ENCODE measurements at regions of chr4 and their contacts with region 1.

Region 1: DNA sequence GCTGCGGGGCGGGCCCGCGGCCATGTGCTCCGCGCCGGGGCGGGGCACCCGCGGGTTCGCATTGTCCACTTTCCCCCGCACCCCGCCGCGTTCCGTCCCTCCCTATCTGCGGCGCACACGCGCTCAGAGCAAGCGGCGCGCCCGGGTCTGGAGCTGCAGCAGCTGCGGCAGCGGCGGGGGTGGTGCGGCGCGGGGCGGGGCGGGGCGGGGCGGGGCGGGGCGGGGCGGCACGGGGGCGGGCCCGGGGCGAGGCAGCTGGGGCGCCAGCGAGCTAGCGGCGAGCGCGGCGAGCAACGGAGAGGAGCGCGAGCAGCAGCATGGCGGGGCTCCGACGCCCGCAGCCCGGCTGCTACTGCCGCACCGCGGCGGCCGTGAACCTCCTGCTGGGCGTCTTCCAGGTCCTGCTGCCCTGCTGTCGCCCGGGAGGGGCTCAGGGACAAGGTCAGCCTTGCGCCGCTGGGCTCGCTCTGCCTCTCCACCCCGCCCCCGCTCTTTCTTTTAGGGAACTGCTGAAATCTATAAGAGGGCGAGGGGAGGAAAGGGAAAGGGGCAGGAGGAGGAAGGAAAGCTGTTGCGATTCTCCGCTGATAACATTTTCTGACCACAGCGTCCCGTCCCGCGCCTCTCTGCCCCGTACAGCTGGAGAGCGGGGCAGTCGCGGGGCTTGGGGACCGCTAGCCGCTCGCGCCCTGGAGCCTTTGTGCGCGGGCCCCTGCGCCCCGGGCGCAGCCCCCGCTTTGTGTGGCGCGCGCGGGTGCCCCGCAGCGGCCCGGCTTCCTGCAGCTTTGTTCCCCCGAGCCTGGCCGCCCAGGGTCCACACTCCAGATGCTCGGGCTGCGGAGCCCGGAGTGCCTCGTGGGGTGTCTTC is at the start of gene TMEM131L:
- DNase-seq: peak; percentile 64
- H3K4me3 ChIP-seq: peak within 1 kb of the TSS; percentile 82 to 94 (median 88)
- H3K27ac ChIP-seq: peak within 1 kb of the TSS; percentile 50
- H3K4me1 ChIP-seq: peaks cover 28% of the 10 kb centered on the region
- H3K27me3 ChIP-seq: no peaks in the 10 kb centered on the region
- CTCF ChIP-seq: peak in 1 of 2 donors; percentile 40
- total RNA-seq, gene TMEM131L: 17.4 to 33.8 TPM

Region 2: DNA sequence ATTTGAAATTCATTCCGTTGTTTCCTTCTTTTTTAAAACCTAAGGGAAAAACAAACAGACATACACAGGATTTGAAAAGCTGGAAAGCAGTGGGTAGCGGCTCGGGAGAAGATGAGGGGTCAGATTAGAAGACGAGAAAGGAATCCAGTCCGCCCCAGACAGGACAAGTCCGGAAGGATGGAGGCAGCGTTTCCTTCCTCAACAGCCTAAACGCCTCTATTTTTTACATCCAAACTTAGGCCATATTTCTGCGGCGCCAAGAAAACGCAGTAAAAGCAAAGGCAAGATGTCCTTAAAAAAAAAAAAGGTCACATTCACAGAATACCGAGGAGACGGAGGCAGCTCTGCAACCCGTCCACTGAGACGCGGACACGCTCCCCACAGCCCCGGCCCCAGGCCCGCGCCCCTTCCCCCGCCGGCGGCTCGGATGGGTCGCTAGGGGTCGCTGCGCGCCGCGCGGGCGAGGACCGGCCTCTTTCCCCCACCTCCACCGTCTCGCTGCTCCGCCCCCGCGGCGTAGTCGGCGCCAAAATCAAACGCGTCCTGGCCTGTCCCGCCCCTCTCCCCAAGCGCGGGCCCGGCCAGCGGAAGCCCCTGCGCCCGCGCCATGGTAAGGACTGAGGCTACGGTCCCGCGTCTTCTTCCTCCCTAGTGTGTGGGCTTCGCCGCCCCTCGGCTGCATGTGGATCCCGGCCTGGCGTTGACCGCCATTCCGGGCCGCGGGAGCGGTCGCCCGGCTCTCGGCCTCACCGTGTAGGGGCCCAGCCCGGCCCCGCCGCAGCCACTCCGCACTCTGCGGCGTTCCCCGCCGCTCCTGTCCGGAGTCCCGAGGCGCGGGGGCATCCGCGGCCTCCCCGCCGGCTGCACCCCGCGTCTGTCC is 121.9 kb before region 1 on chr4 and contains the start of gene MND1:
- CTCF ChIA-PET with region 1: no interaction called
- dilution Hi-C with region 1: no loop called
- in situ Hi-C with region 1: no loop called
- intact Hi-C with region 1: loop called (anchors 1 kb)
- DNase-seq: peak; percentile 80
- H3K4me3 ChIP-seq: peak within 1 kb of the TSS; percentile 58 to 95 (median 86)
- H3K27ac ChIP-seq: peak within 1 kb of the TSS; percentile 93
- H3K4me1 ChIP-seq: peaks cover 12% of the 10 kb centered on the region
- H3K27me3 ChIP-seq: no peaks in the 10 kb centered on the region
- CTCF ChIP-seq: peak in 1 of 2 donors; percentile 84
- total RNA-seq, gene MND1: 0.83 to 10.4 TPM

Region 3: DNA sequence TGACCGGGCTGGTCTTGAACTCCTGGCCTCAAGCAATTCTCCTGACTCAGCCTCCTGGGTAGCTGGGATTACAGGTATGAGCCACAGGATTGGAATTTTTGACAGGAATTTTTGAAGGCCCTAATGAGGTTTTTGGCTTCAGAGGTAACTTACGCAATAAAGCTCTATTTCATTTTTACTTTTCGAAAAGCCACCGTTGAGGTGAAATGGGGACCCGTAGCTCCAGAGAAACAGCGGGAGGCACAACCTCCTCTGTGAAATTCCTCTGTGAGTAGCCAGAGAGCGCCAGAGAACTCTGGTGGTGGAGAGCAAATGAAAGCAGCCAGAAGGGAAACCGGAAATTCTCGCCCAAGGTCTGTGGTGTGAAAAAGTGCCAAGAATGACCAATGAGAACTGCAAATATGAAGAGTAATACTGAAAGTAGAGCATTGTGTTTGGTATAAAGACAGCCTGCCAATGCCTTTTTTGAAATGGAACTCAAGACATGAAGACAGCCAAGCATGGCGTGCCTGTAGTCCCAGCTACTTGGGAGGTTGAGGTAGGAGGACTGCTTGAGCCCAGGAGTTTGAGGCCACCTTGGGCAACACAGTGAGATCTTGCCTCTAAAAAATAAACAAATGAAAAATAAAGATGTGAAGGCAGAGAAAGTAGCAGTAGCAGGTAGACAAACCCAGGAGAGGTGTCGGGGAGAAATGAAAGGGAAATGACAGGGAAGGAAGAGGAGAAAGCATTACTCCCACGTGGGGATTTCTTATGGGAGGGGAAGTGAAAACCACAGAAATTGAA is 33.2 kb before region 1 on chr4:
- CTCF ChIA-PET with region 1: interaction called, 8 read pairs
- dilution Hi-C with region 1: no loop called
- in situ Hi-C with region 1: no loop called
- intact Hi-C with region 1: loop called (anchors 2 kb)
- DNase-seq: peak; percentile 94
- H3K4me3 ChIP-seq: no peak overlapping the region
- H3K27ac ChIP-seq: peak overlapping the region; percentile 52
- H3K4me1 ChIP-seq: peaks cover 11% of the 10 kb centered on the region
- H3K27me3 ChIP-seq: no peaks in the 10 kb centered on the region
- CTCF ChIP-seq: peak; percentile 75 to 84

Region 4: GRCh38 chr4:153486281-153487151 is 20.2 kb after region 1 on chr4:
- CTCF ChIA-PET with region 1: interaction called, 3 read pairs
- dilution Hi-C with region 1: no loop called
- in situ Hi-C with region 1: no loop called
- intact Hi-C with region 1: loop called (anchors 1 kb)
- DNase-seq: peak; percentile 97
- H3K4me3 ChIP-seq: peak overlapping the region in 2 of 3 experiments; percentile 2 to 10
- H3K27ac ChIP-seq: peak overlapping the region; percentile 75
- H3K4me1 ChIP-seq: peaks cover 61% of the 10 kb centered on the region
- H3K27me3 ChIP-seq: no peaks in the 10 kb centered on the region
- CTCF ChIP-seq: peak in 1 of 2 donors; percentile 8

Region 5: DNA sequence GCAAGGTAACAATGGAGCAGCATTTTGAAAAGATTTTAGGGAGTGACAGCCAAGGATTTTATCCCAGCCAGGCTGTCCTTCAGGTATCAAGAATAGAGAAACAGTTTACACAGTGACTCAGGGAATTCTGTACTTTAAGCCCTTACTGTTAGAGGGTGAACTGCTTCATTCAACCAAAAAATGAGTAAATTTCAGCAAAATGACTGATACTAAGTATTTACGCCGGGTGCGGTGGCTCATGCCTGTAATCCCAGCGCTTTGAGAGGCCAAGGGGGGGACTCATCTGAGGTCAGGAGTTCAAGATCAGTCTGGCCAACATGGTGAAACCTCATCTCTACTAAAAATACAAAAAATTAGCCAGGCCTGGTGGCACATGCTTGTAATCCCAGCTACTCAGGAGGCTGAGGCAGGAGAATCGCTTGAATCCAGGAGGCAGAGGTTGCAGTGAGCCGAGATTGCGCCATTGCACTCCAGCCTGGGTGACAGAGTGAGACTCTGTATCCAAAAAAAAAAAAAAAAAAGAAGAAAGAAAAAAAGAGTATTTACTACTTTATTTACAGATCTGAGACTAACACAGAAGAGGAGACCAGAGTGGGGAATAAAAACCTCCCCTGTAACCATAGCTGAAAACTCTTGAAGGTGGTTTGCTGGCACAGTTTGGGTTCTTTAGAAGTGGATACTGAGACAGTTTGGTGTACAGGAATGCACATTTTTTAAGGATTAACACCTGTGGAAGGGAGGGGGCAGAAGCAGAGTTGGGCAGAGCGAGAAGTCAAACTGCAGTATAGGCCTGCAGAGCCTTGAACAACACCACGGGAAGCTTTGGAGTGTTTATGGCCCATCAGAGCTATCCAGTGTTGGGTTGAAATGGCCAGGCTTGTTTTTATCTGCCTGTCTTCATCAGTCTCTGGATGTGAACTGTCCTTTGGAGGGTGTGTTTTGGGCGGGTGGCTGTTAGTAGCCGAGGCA is 40.3 kb after region 1 on chr4:
- CTCF ChIA-PET with region 1: no interaction called
- dilution Hi-C with region 1: no loop called
- in situ Hi-C with region 1: no loop called
- intact Hi-C with region 1: no loop called
- DNase-seq: no peak
- H3K4me3 ChIP-seq: no peak overlapping the region
- H3K27ac ChIP-seq: no peak overlapping the region
- H3K4me1 ChIP-seq: no peaks in the 10 kb centered on the region
- H3K27me3 ChIP-seq: no peaks in the 10 kb centered on the region
- CTCF ChIP-seq: no peak

Region 6: DNA sequence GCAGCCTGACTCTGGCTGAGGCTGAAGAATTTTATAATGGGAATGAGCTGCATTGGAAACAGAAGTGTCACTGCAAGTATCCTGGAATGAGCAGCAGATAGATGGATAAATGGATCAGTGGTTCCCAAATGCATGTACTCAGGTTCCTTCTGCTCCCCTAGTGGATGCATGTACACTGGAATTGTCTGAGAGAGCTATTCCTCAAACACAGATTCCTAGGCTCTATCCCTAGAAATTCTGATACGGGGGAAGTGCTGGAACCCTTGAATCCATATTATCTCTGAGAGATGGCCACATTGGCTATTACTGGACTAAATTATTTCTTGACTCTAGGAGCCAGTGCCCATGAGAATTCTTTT is 64.7 kb after region 1 on chr4:
- CTCF ChIA-PET with region 1: no interaction called
- dilution Hi-C with region 1: no loop called
- in situ Hi-C with region 1: no loop called
- intact Hi-C with region 1: loop called (anchors 5 kb)
- DNase-seq: no peak
- H3K4me3 ChIP-seq: no peak overlapping the region
- H3K27ac ChIP-seq: no peak overlapping the region
- H3K4me1 ChIP-seq: no peaks in the 10 kb centered on the region
- H3K27me3 ChIP-seq: no peaks in the 10 kb centered on the region
- CTCF ChIP-seq: peak in 1 of 2 donors; percentile 16

Region 7: DNA sequence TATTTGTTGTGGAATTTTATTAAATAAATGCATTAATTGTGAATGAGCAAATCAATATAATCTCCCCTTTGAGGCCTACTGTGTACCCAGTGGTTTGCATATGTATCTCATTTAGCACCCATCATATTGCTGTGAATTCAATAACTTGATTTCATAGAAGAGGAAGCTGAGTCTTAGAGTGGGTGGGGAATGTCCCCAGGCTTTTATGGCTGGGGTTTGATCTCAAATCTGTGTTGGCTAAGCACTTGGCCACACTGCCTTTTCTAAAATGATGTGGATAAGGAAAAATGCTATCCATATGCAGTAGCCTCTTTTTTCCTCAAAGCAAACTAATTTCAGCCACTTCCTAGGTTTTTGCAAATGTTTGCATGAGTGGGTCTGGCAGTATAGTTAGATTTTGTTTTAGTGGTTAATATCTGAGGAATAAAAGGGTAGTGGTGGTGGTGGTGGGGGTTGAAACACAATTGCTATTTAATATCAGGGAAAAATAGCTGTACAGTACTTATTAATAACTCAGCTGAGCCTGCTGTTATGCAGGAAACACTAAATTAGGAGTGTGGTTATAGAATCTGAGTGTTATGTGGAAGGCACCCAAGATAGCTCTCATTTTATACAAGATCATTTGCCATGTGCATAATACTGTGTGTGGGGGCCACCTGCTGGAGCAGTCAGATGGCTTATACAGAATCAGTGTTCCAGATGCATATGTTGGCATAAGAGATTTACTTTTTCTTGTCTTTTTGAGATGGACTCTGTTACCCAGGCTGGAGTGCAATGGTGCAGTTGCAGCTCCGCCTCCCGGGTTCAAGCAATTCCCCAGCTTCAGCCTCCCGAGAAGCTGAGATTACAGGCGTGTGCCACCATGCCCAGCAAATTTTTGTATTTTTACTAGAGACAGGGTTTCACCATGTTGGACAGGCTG is 107.8 kb after region 1 on chr4:
- CTCF ChIA-PET with region 1: interaction called, 5 read pairs
- dilution Hi-C with region 1: no loop called
- in situ Hi-C with region 1: no loop called
- intact Hi-C with region 1: loop called (anchors 1 kb)
- DNase-seq: peak; percentile 61
- H3K4me3 ChIP-seq: no peak overlapping the region
- H3K27ac ChIP-seq: no peak overlapping the region
- H3K4me1 ChIP-seq: peaks cover 6% of the 10 kb centered on the region
- H3K27me3 ChIP-seq: no peaks in the 10 kb centered on the region
- CTCF ChIP-seq: peak; percentile 53 to 69

Measured in mammary epithelial cell (primary cell).